ENCODE measurements at regions of chr20 and their contacts with region 1.

Region 1: GRCh38 chr20:4014031-4014474 is 1.3 kb downstream of the RNF24 start:
- DNase-seq: peak; percentile 93
- H3K4me3 ChIP-seq: peak overlapping the region; percentile 90 to 98
- H3K27ac ChIP-seq: peak overlapping the region; percentile 95 to 96
- H3K4me1 ChIP-seq: no peaks in the 10 kb centered on the region
- H3K27me3 ChIP-seq: no peaks in the 10 kb centered on the region
- CTCF ChIP-seq: peak in 3 of 4 experiments; percentile 69 to 93 (median 75)
- POLR2A ChIP-seq: peak; percentile 30

Region 2: DNA sequence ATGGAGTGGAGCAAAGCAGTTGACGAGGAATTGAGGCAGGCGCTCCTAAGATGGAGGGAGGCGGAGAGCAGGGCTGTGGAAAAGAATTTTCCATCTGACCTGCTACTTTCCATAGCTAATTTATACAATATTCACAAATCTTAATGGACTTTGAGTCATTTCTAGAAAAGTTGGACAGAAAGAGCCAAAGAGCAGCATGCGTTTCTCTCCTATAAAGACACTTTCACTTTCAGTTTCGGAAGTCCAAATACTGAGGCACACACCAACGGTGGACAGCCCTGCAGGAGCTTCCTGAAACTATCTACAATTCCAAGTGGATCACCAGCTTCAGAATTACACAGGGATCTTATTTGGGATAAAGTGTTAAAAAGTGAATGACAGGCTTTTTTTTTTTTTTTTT is 81.4 kb before region 1 on chr20:
- intact Hi-C with region 1: loop called (anchors 5 kb)
- DNase-seq: no peak
- H3K4me3 ChIP-seq: peak overlapping the region; percentile 12 to 20
- H3K27ac ChIP-seq: peak overlapping the region; percentile 23 to 69
- H3K4me1 ChIP-seq: no peaks in the 10 kb centered on the region
- H3K27me3 ChIP-seq: no peaks in the 10 kb centered on the region
- CTCF ChIP-seq: no peak
- POLR2A ChIP-seq: no peak

Region 3: DNA sequence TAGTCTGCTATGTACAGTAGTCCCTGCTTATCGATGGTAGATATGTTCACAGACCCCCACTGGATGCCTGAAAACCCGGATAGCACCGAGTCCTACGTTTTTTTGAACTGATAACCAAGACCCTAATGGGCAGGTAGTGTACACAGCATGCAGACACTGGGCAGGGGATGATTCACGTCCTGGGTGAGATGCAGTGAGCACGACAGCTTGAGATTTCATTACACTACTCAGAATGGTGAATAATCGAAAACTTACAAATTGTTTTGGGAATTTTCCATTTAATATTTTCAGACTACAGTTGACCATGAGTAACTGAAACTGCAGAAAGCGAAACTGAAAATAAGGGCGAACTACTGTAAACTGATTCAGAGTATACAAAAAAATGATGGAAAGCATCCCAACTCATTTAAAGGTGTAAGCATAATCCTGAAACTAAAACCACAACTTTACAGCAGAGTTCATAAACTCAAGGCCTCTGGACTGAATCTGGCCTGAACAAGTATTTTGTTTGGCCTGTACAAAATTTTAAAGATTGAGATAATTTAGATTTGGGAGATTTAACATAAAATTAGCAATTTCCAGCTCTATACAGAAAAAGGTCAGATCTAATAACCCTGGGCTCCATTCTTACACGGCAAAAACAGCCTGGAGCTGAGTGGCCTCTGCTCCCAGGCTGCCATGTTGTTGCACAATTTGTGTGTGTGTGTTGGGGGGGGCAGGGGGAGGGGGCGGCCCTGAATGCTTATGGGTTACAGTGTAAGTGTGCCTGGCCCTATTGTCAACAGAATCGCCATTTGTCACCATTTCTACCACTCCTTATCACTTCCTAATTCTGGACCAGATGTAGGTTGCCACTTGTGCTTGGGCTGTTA is 33.6 kb before region 1 on chr20:
- intact Hi-C with region 1: no loop called
- DNase-seq: no peak
- H3K4me3 ChIP-seq: peak overlapping the region in 1 of 2 donors; percentile 20
- H3K27ac ChIP-seq: peak overlapping the region; percentile 10 to 35
- H3K4me1 ChIP-seq: no peaks in the 10 kb centered on the region
- H3K27me3 ChIP-seq: no peaks in the 10 kb centered on the region
- CTCF ChIP-seq: no peak
- POLR2A ChIP-seq: no peak

Region 4: DNA sequence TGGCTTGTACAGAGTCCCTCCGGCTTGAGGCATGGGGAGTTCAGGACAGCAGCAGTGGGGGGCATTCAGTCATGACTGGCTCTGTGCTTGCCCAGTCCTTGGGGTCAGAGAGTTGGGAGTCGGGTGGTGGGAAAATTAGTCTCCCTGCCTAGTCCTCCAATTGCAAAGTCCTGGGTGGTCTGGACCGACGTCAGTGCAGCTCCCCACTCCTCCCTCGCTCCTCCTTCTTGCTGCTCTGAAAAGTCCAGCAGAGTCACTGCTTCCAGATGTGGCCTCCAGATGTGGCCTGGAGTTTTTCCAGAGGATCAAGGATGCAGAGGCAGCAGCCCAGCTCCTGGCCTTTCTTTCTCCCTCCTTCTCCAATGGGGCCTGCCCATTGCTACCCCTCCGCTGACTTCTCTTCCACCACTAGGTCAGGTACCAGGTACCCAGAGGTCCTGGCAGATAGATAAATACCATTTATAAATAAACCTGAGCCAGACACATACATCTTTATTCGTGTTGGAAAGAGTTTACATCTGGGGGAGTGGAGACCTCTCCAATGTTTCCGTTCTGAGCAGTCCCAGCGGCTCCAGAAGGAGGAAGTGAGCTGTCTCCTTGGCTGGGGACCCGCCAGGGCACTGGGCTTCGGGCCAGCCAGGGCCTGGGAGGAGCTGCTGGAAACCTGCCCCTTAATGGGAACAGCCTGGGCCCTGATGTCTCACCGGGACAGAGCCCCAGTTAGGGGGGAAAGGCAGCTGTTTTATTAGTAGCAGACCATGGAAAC is 50.3 kb after region 1 on chr20:
- intact Hi-C with region 1: loop called (anchors 5 kb)
- DNase-seq: peak; percentile 91
- H3K4me3 ChIP-seq: no peak overlapping the region
- H3K27ac ChIP-seq: peak overlapping the region; percentile 66 to 75
- H3K4me1 ChIP-seq: peaks cover 4% of the 10 kb centered on the region
- H3K27me3 ChIP-seq: no peaks in the 10 kb centered on the region
- CTCF ChIP-seq: peak in 1 of 4 experiments; percentile 3
- POLR2A ChIP-seq: no peak

Region 5: GRCh38 chr20:4089756-4090487 is 75.9 kb after region 1 on chr20:
- intact Hi-C with region 1: loop called (anchors 5 kb)
- DNase-seq: no peak
- H3K4me3 ChIP-seq: no peak overlapping the region
- H3K27ac ChIP-seq: no peak overlapping the region
- H3K4me1 ChIP-seq: no peaks in the 10 kb centered on the region
- H3K27me3 ChIP-seq: no peaks in the 10 kb centered on the region
- CTCF ChIP-seq: no peak
- POLR2A ChIP-seq: no peak

Measured in prostate gland (tissue), 2 donors.